Dorsolateral prefrontal cortex (tissue), 120 donors: ENCODE measurements at regions of chr6 and their contacts with region 1.

Region 1: GRCh38 chr6:87154993-87155841 is at the start of gene ZNF292:
- DNase-seq: peak; percentile 91 to 95 (median 94)
- H3K4me3 ChIP-seq: peak within 1 kb of the TSS; percentile 75 to 100 (median 96)
- H3K27ac ChIP-seq: peak within 1 kb of the TSS; percentile 84 to 100 (median 98)
- H3K27me3 ChIP-seq: no peaks in the 10 kb centered on the region
- CTCF ChIP-seq: peak in 28 of 56 donors; percentile 6 to 53 (median 31)
- total RNA-seq, gene ZNF292: 60.4 to 119 (median 85.4) TPM

Region 2: DNA sequence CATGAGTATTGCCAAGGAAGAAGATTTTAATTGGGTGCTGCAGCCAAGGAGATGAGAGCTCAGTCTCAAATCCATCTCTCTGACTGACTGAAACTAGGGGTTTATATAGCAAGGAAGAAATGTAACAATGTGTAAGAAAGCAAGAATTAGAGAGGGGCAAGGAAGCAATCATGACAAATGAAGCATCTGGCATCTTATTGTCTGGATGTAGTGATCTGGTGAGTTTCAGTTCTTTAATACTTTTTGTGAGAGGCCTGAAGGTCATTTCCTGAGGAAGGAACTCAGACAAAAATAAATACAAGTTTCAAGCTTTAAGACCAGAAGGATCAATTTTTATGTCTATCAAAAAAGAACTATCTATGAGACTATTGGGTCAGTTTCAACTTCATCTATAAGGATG is 153.7 kb before region 1 on chr6:
- intact Hi-C with region 1: no loop called
- DNase-seq: no peak
- H3K4me3 ChIP-seq: no peak overlapping the region
- H3K27ac ChIP-seq: no peak overlapping the region
- H3K27me3 ChIP-seq: peaks cover 0 to 3% (median 0%) of the 10 kb centered on the region in 45 donors
- CTCF ChIP-seq: no peak

Region 3: GRCh38 chr6:87237804-87238203 is 82.6 kb after region 1 on chr6:
- intact Hi-C with region 1: loop called (anchors 5 kb)
- DNase-seq: no peak
- H3K4me3 ChIP-seq: no peak overlapping the region
- H3K27ac ChIP-seq: no peak overlapping the region
- H3K27me3 ChIP-seq: no peaks in the 10 kb centered on the region
- CTCF ChIP-seq: peak; percentile 39 to 74 (median 60)

Region 4: GRCh38 chr6:87407901-87408720 is 252.9 kb after region 1 on chr6 and contains the start of gene CFAP206:
- intact Hi-C with region 1: loop called in 1 of 2 experiments (anchors 5 kb)
- DNase-seq: peak; percentile 51 to 84 (median 74)
- H3K4me3 ChIP-seq: peak within 1 kb of the TSS; percentile 64 to 98 (median 92)
- H3K27ac ChIP-seq: peak within 1 kb of the TSS; percentile 24 to 95 (median 85)
- H3K27me3 ChIP-seq: no peaks in the 10 kb centered on the region
- CTCF ChIP-seq: peak in 23 of 56 donors; percentile 6 to 45 (median 26)
- total RNA-seq, gene CFAP206: 0.82 to 5.3 (median 3.2) TPM

Region 5: DNA sequence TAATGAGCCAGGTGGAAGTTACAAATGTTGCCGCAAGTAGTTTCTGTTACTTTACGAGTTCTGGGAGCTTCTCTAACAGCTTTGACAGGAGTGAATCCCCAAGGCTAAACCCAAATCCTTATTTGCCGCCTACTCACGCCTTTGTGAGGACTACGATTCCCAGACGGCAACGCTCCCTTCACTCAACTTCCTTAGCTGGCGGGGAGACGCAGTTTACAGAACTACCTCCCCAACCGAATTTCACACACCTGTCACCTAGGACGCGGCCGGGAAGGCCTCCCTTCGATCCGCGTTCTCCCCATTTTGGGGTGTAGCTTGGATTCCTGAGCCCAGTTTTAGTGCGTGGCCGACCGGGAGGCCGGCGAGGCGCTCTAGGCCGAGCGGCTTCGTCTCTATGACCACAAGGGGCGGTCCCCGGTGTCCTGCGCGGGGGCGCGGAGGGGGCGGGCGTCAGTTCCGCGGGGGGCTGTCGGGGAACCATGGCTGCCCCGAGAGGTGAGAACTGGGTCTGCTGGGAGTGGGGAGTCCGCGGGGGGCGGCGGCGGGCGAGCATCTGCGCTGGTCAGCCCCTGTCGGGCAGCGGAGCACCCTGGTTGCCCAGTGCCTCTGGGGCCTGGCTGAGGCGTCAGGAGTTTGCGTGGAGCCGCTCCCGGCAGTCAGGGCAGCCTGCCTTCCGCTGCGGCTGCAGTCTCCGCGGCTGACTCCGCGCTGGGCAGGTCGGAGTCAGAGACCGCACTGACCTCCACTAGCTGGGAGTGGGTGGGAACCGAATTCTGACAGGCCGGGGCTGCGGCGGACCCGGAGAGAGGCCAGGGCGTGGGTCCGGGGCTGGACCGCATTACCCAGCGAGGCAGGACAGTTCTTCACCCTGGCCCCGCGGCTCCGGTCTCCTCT is 317.6 kb after region 1 on chr6 and contains the start of gene SLC35A1:
- intact Hi-C with region 1: loop called in 1 of 2 experiments (anchors 1 kb)
- DNase-seq: peak; percentile 76 to 93 (median 86)
- H3K4me3 ChIP-seq: peak within 1 kb of the TSS; percentile 58 to 99 (median 89)
- H3K27ac ChIP-seq: peak within 1 kb of the TSS; percentile 65 to 99 (median 93)
- H3K27me3 ChIP-seq: no peaks in the 10 kb centered on the region
- CTCF ChIP-seq: peak in 49 of 56 donors; percentile 6 to 69 (median 44)
- total RNA-seq, gene SLC35A1: 9.8 to 34.1 (median 22.8) TPM

Region 6: GRCh38 chr6:87701676-87702588 is 546.7 kb after region 1 on chr6 and contains the start of gene AKIRIN2:
- intact Hi-C with region 1: loop called (anchors 5 to 10 kb)
- DNase-seq: peak; percentile 93 to 97 (median 96)
- H3K4me3 ChIP-seq: peak within 1 kb of the TSS; percentile 61 to 98 (median 93)
- H3K27ac ChIP-seq: peak within 1 kb of the TSS; percentile 79 to 100 (median 98)
- H3K27me3 ChIP-seq: no peaks in the 10 kb centered on the region
- CTCF ChIP-seq: peak in 9 of 56 donors; percentile 3 to 41 (median 13)
- total RNA-seq, gene AKIRIN2: 38.8 to 78.6 (median 58.0) TPM